ENCODE measurements at regions of chr18 and their contacts with region 1.

Region 1: GRCh38 chr18:70333757-70334156 is 44.9 kb downstream of the SOCS6 start:
- DNase-seq: peak; percentile 66
- ATAC-seq: peak; percentile 16; the same call in 1 of the 2 replicates
- H3K4me3 ChIP-seq: no peak overlapping the region
- H3K27ac ChIP-seq: peak overlapping the region; percentile 78
- H3K4me1 ChIP-seq: peaks cover 50% of the 10 kb centered on the region
- H3K27me3 ChIP-seq: no peaks in the 10 kb centered on the region
- CTCF ChIP-seq: no peak

Region 2: DNA sequence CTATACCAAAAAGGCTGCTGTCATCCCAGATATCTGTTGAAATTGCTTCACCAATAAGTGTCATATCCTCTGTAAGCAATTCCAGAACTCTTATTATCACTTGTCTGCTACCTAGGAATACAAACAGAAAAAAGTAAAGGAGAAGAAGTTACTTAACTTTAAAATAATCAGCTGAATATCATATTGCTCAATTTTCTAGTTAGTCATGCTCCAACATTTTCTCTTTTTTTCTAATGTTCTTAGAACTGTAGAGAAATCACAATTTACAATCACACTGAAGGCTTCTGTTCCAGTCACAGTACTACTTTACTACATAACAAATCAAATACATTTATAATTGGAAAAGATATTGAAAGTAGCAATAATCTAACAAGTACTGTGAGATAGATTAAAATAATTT is 145.6 kb before region 1 on chr18:
- CTCF ChIA-PET with region 1: interaction called, 13 read pairs
- POLR2A ChIA-PET with region 1: no interaction called
- intact Hi-C with region 1: no loop called
- DNase-seq: no peak
- ATAC-seq: no peak
- H3K4me3 ChIP-seq: no peak overlapping the region
- H3K27ac ChIP-seq: no peak overlapping the region
- H3K4me1 ChIP-seq: no peaks in the 10 kb centered on the region
- H3K27me3 ChIP-seq: no peaks in the 10 kb centered on the region
- CTCF ChIP-seq: no peak

Region 3: DNA sequence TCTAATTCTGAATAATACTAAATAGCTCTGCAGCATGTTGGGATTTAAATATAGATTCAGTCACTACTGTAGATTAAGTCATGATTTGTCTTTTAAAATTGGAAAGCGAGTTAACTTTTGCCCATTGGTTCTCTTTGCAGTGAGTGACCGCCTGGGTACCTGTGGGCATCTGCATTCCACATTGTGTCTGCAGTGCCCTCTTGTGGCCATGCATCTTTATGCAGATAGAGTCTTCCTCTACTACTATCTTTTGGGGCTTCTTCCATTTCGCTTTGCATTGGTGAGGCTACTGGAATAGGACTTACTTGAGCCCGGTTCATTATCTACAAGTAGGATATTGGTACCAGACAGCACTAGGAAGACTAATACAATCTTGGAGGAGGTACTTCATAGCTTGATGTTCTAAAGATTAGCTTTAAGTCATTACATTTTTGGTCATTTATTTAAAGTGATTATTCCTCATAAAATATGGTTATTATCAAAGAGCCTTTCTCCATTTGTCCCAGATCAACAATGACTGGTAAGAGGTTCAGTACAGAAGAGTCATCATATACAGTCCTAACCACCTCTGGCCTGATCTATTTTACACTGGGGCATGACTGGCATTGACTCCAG is 158.1 kb after region 1 on chr18:
- CTCF ChIA-PET with region 1: no interaction called
- POLR2A ChIA-PET with region 1: no interaction called
- intact Hi-C with region 1: no loop called
- DNase-seq: peak; percentile 80
- ATAC-seq: peak; percentile 85
- H3K4me3 ChIP-seq: no peak overlapping the region
- H3K27ac ChIP-seq: no peak overlapping the region
- H3K4me1 ChIP-seq: no peaks in the 10 kb centered on the region
- H3K27me3 ChIP-seq: peaks cover 9% of the 10 kb centered on the region
- CTCF ChIP-seq: peak; percentile 92

Measured in PC-3 (cell line).